Activated T-helper 2 cell treated with anti-CD3 and anti-CD28 coated beads, Interferon-gamma antibody, Interleukin-2, Interleukin-4, amounts not matched to agents 10 μg/mL and 5 μg/mL and 100 μg/mL, durations not matched to agents 14 hours and 24 hours and 36 hours (primary cell): ENCODE measurements at regions of chr1 and their contacts with region 1.

Region 1: GRCh38 chr1:25675729-25676476 is 59.3 kb downstream of the MAN1C1 start:
- DNase-seq: peak; percentile 80
- H3K4me3 Mint-ChIP-seq: peak overlapping the region; percentile 28
- H3K27ac Mint-ChIP-seq: peak overlapping the region; percentile 24
- H3K4me1 Mint-ChIP-seq: peaks cover 48% of the 10 kb centered on the region
- H3K27me3 Mint-ChIP-seq: peaks cover 79% of the 10 kb centered on the region

Region 2: GRCh38 chr1:25549273-25550154 is 126.4 kb before region 1 on chr1:
- intact Hi-C with region 1: loop called (anchors 2 kb)
- DNase-seq: peak; percentile 68
- H3K4me3 Mint-ChIP-seq: peak overlapping the region; percentile 54
- H3K27ac Mint-ChIP-seq: peak overlapping the region; percentile 88
- H3K4me1 Mint-ChIP-seq: peaks cover 29% of the 10 kb centered on the region
- H3K27me3 Mint-ChIP-seq: peaks cover 6% of the 10 kb centered on the region

Region 3: DNA sequence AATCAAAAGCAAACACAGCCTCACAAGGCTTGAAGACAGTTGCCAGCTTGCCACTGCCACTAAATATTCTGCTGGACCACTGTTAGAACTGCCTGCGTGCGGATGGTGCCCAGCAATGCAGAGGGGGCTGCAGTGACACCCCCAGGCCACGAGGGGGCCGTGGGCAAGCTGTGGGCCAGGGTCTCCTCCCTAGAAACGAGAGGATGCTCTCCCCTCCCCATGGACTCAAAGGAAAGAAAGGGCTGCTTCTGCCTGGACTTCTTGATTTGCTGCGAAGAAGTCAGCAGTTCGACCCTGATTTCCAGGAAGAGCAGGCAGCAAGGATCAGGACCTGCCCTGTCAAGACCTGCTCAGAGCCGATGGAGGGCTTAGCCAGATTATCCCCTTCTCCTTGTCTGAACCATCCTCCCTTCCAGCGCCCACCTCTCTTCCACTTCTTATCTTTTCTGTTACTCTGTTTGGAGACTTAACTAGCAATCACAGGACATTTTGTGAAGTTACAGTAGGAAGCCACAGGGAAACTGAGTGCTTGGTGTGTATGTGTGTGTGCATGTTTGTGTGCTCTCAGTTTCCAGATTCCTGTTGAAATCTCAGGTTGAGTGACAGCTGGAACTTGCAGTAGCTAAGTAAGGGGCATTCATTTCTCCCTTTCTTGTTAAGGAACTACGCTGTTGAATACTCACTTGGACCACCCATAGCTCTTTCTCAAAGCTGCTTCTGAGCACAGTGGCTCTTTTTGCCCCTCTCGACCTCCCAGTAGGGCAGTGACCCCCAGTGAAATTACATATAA is 56.6 kb before region 1 on chr1:
- intact Hi-C with region 1: loop called (anchors 1 kb)
- DNase-seq: no peak
- H3K4me3 Mint-ChIP-seq: peak overlapping the region; percentile 85
- H3K27ac Mint-ChIP-seq: no peak overlapping the region
- H3K4me1 Mint-ChIP-seq: peaks cover 72% of the 10 kb centered on the region
- H3K27me3 Mint-ChIP-seq: peaks cover 75% of the 10 kb centered on the region

Region 4: DNA sequence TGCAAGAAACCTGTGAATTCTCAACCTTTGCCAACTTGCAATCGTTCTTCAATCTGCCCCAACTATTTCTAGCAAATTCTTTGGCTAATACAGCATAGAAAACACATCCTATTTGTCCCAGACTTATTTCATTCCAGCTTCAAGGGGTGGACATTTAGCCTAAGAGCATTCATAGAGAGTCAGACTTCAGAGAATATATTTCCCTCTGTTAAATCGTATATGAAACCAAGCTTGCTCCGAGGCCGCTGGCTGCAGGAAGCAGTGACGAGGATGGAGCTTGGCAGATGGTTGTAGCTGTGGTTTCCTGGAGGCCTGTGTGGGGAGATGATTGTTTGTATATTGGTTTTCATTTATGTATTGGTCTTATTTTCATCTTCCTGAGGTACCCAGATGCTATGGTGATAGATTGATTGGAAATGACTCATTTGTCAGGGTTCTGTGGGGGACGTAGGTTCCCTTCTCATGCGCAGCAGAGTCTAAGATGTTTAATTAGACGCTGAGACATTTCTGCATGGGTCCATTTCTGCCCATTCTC is 33.3 kb before region 1 on chr1:
- intact Hi-C with region 1: loop called (anchors 1 kb)
- DNase-seq: peak; percentile 75
- H3K4me3 Mint-ChIP-seq: peak overlapping the region; percentile 63
- H3K27ac Mint-ChIP-seq: peak overlapping the region; percentile 44
- H3K4me1 Mint-ChIP-seq: peaks cover 27% of the 10 kb centered on the region
- H3K27me3 Mint-ChIP-seq: peaks cover 78% of the 10 kb centered on the region

Region 5: GRCh38 chr1:25653416-25653957 is 22.4 kb before region 1 on chr1:
- intact Hi-C with region 1: no loop called
- DNase-seq: no peak
- H3K4me3 Mint-ChIP-seq: no peak overlapping the region
- H3K27ac Mint-ChIP-seq: no peak overlapping the region
- H3K4me1 Mint-ChIP-seq: no peaks in the 10 kb centered on the region
- H3K27me3 Mint-ChIP-seq: peaks cover 60% of the 10 kb centered on the region

Region 6: DNA sequence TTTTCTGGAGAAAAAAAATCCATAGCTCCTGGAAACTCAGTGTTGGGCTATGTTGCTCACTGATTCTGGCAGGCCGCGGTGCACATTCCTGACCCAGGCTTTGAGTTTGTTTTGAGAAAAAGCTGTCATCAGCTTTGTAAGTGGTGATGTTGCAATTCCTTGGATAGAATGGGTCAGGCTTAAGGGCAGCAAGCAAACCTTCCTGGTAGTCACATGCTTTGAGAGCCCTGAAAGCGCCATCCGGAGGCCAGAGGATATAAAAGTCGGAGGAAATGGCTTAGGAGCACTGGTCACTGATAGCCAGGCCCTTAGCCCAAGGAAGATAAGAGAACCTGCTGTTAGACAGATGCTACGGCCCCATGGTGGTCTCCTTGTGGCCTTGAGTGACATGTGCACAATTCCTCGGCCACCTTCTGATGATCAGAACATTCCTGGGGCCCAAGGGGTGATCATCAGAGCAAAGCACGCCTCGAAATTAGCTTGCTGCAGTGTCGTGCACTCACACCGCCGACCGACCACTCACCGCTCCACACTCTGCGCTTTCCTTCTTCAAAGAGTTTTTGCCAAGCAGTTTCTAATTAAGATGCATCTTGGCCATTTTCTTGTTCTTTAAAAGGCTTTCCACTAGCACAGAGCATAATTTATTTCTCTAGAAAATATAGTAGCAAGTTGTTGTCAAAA is 19.3 kb after region 1 on chr1:
- intact Hi-C with region 1: loop called (anchors 2 kb)
- DNase-seq: no peak
- H3K4me3 Mint-ChIP-seq: no peak overlapping the region
- H3K27ac Mint-ChIP-seq: no peak overlapping the region
- H3K4me1 Mint-ChIP-seq: peaks cover 27% of the 10 kb centered on the region
- H3K27me3 Mint-ChIP-seq: peaks cover 64% of the 10 kb centered on the region

Region 7: GRCh38 chr1:25774921-25775801 is 99.3 kb after region 1 on chr1:
- intact Hi-C with region 1: loop called (anchors 1 kb)
- DNase-seq: peak; percentile 74
- H3K4me3 Mint-ChIP-seq: no peak overlapping the region
- H3K27ac Mint-ChIP-seq: peak overlapping the region; percentile 5
- H3K4me1 Mint-ChIP-seq: peaks cover 20% of the 10 kb centered on the region
- H3K27me3 Mint-ChIP-seq: peaks cover 61% of the 10 kb centered on the region

Region 8: DNA sequence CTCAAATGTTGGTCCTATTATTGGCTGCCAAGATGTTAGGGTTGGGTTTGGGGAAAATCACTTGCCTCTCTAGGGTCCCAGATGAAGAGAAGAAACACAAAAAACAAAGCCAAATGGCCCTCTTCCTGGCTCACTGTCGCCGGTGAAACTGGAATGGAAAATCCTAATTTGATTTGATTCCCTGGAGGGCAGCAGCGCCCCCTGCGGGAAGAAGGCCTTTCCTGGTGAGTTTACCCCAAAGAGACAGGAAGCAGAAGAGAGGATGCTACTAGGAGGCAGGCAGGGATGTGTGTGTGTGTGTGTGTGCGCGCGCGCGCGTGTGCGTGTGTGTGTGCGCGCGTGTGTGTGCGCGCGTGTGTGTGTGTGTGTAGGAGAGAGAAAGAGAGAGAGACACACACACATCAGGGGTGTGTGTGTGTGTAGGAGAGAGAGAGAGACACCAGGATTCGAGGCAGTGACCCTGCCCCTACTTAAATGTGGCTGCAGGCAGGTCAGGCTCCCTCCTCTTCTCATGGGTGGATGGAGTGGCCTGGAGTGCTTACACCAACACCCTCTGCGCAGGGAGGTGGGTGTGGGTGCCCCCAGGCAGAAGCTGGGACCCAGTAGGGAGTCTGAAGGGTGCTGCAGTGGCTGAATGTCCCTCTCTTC is 121.0 kb after region 1 on chr1:
- intact Hi-C with region 1: loop called (anchors 2 kb)
- DNase-seq: peak; percentile 67
- H3K4me3 Mint-ChIP-seq: no peak overlapping the region
- H3K27ac Mint-ChIP-seq: no peak overlapping the region
- H3K4me1 Mint-ChIP-seq: peaks cover 15% of the 10 kb centered on the region
- H3K27me3 Mint-ChIP-seq: peaks cover 52% of the 10 kb centered on the region

Region 9: GRCh38 chr1:27071049-27071416 is 1395.1 kb after region 1 on chr1:
- intact Hi-C with region 1: no loop called
- DNase-seq: no peak
- H3K4me3 Mint-ChIP-seq: no peak overlapping the region
- H3K27ac Mint-ChIP-seq: no peak overlapping the region
- H3K4me1 Mint-ChIP-seq: no peaks in the 10 kb centered on the region
- H3K27me3 Mint-ChIP-seq: no peaks in the 10 kb centered on the region